ENCODE measurements at regions of chr4 and their contacts with region 1.

Region 1: GRCh38 chr4:143558823-143559756 is 45.6 kb downstream of the SMARCA5 start:
- DNase-seq: peak; percentile 62
- H3K4me3 Mint-ChIP-seq: peak overlapping the region; percentile 87
- H3K27ac Mint-ChIP-seq: peak overlapping the region; percentile 87
- H3K4me1 Mint-ChIP-seq: peaks cover 42% of the 10 kb centered on the region
- H3K27me3 Mint-ChIP-seq: no peaks in the 10 kb centered on the region

Region 2: DNA sequence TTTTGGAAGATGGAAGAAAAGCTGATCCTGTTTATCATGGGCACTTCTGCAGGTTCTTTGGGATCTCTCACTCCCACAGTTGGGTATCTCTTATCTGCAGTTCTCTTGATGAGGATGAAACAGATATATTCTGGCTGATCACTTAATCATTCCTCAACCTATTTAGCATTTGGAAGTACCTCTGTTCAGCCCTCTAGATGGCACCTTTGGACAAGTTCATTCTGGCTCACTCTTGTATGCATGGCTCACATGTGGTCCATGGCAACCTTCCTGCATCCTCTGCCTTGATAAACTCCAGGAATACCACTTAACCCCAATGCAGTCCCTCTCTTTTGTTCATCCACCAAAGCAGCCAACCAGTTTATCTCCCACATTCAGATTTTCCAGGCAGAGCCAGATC is 28.6 kb after region 1 on chr4:
- intact Hi-C with region 1: no loop called
- DNase-seq: no peak
- H3K4me3 Mint-ChIP-seq: no peak overlapping the region
- H3K27ac Mint-ChIP-seq: no peak overlapping the region
- H3K4me1 Mint-ChIP-seq: no peaks in the 10 kb centered on the region
- H3K27me3 Mint-ChIP-seq: peaks cover 1% of the 10 kb centered on the region

Region 3: GRCh38 chr4:143616771-143617170 is 57.7 kb after region 1 on chr4:
- intact Hi-C with region 1: loop called (anchors 5 kb)
- DNase-seq: peak; percentile 4
- H3K4me3 Mint-ChIP-seq: no peak overlapping the region
- H3K27ac Mint-ChIP-seq: no peak overlapping the region
- H3K4me1 Mint-ChIP-seq: peaks cover 13% of the 10 kb centered on the region
- H3K27me3 Mint-ChIP-seq: peaks cover 27% of the 10 kb centered on the region

Region 4: GRCh38 chr4:144014808-144015207 is 455.7 kb after region 1 on chr4:
- intact Hi-C with region 1: loop called (anchors 5 kb)
- DNase-seq: no peak
- H3K4me3 Mint-ChIP-seq: no peak overlapping the region
- H3K27ac Mint-ChIP-seq: no peak overlapping the region
- H3K4me1 Mint-ChIP-seq: no peaks in the 10 kb centered on the region
- H3K27me3 Mint-ChIP-seq: peaks cover 2% of the 10 kb centered on the region

Region 5: GRCh38 chr4:145097821-145098674 is 1539.0 kb after region 1 on chr4 and contains the starts of genes ABCE1 and ANAPC10:
- intact Hi-C with region 1: loop called (anchors 1 kb)
- DNase-seq: peak; percentile 94
- H3K4me3 Mint-ChIP-seq: peak within 1 kb of the TSS; percentile 92
- H3K27ac Mint-ChIP-seq: peak within 1 kb of the TSS; percentile 100
- H3K4me1 Mint-ChIP-seq: peaks cover 27% of the 10 kb centered on the region
- H3K27me3 Mint-ChIP-seq: no peaks in the 10 kb centered on the region
- total RNA-seq, gene ABCE1: 155 and 176 TPM in 2 replicates
- total RNA-seq, gene ANAPC10: 25.4 and 32.1 TPM in 2 replicates

Measured in activated T-helper 1 cell treated with anti-CD3 and anti-CD28 coated beads, Interleukin-12 subunit alpha, Interleukin-12 subunit beta, Interleukin-2, Interleukin-4 antibody, amounts not matched to agents 30 ng/mL and 10 ng/mL and 1 ng/mL, durations not matched to agents 14 hours and 24 hours and 36 hours (primary cell).